ENCODE measurements at regions of chr9 and their contacts with region 1.

Region 1: DNA sequence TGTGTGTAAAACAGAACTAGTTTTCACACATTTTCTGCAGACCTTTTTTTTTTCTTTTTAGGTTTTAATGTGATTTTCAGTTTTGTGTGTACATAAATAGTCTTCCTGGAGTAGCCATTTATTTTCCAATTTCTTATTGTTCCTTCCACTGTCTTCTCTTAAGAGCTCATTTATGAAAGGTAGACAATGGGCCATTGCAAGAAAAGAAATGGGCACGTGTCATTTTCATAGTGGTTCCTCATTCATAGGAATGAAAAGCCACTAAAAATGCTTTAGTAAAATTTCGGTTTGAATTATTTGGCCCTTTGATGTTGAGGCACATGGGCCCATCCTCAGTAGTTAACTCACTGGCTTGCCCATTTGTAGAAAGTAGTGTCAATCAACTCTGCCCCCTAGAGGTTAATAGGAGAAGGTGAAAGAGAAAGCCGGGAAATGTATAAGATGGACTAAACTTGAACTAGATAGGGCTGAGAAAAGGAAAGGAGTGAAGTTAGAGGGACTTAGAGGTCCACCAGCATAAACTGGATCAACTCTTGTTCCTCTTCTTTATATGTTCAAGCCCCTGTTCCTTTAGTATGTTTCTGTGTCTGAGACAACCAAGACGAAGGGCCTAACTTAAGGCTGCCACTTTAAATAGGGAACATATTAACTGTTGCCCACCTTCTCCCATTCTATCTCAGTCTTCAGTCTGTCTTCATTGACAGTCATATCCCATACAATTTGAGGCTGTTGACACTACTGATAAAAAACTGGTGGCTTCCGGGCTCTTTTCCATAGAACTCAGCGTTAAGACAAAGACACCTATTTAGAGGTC is 72.6 kb downstream of the SMARCA2 start:
- DNase-seq: no peak
- ATAC-seq: peak; percentile 83
- H3K4me3 Mint-ChIP-seq: no peak overlapping the region
- H3K27ac Mint-ChIP-seq: no peak overlapping the region
- H3K4me1 Mint-ChIP-seq: no peaks in the 10 kb centered on the region
- H3K27me3 Mint-ChIP-seq: no peaks in the 10 kb centered on the region
- CTCF ChIP-seq: peak; percentile 40

Region 2: DNA sequence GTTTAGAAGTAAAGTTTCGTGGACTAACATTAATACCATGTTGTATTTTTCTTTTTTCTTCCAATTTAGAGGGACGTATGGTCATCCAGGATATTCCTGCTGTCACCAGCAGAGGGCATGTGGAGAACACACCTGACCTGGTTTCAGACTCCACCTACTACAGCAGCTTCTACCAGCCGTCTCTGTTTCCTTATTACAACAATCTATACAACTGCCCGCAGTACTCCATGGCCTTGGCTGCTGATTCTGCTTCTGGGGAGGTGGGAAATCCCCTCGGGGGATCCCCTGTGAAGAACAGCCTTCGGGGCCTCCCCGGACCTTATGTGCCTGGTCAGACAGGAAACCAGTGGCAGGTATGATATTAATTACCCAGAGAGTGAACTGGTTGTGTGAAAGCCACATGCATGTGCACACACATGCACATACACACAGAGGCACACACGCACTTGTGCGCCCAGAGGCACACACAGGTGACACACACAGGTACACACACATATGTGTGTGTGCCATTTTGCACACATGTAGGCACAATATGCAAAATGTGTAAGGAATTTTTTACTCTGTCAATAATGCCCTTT is 1193.8 kb before region 1 on chr9:
- CTCF ChIA-PET with region 1: interaction called, 4 read pairs
- POLR2A ChIA-PET with region 1: no interaction called
- intact Hi-C with region 1: loop called (anchors 10 kb)
- DNase-seq: peak; percentile 38
- ATAC-seq: peak; percentile 98
- H3K4me3 Mint-ChIP-seq: no peak overlapping the region
- H3K27ac Mint-ChIP-seq: peak overlapping the region; percentile 47
- H3K4me1 Mint-ChIP-seq: peaks cover 13% of the 10 kb centered on the region
- H3K27me3 Mint-ChIP-seq: peaks cover 18% of the 10 kb centered on the region
- CTCF ChIP-seq: no peak

Region 3: GRCh38 chr9:1460143-1460769 is 627.5 kb before region 1 on chr9:
- CTCF ChIA-PET with region 1: interaction called, 8 read pairs
- POLR2A ChIA-PET with region 1: no interaction called
- intact Hi-C with region 1: loop called (anchors 1 kb)
- DNase-seq: no peak
- ATAC-seq: no peak
- H3K4me3 Mint-ChIP-seq: no peak overlapping the region
- H3K27ac Mint-ChIP-seq: no peak overlapping the region
- H3K4me1 Mint-ChIP-seq: no peaks in the 10 kb centered on the region
- H3K27me3 Mint-ChIP-seq: peaks cover 4% of the 10 kb centered on the region
- CTCF ChIP-seq: no peak

Region 4: DNA sequence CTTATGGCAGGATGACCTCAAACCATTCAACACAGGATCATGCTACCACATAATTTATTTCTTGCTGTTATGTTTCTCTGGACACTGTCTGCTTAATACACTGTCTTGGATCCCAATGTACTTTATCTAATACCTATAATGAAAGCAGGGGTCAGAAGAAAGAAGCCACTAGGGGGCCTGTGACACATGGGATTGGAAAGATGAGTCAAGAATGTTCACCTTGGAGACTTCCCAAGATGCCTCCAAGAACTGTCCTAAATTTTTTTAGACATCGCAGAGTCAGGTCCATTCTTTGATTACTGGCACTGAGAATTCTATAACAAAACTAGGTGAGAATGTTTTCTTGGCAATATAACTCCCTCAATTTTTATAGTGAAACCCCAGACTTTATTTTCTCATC is 378.4 kb before region 1 on chr9:
- CTCF ChIA-PET with region 1: interaction called, 10 read pairs
- POLR2A ChIA-PET with region 1: no interaction called
- intact Hi-C with region 1: loop called (anchors 1 kb)
- DNase-seq: no peak
- ATAC-seq: no peak
- H3K4me3 Mint-ChIP-seq: no peak overlapping the region
- H3K27ac Mint-ChIP-seq: no peak overlapping the region
- H3K4me1 Mint-ChIP-seq: no peaks in the 10 kb centered on the region
- H3K27me3 Mint-ChIP-seq: peaks cover 4% of the 10 kb centered on the region
- CTCF ChIP-seq: no peak

Region 5: DNA sequence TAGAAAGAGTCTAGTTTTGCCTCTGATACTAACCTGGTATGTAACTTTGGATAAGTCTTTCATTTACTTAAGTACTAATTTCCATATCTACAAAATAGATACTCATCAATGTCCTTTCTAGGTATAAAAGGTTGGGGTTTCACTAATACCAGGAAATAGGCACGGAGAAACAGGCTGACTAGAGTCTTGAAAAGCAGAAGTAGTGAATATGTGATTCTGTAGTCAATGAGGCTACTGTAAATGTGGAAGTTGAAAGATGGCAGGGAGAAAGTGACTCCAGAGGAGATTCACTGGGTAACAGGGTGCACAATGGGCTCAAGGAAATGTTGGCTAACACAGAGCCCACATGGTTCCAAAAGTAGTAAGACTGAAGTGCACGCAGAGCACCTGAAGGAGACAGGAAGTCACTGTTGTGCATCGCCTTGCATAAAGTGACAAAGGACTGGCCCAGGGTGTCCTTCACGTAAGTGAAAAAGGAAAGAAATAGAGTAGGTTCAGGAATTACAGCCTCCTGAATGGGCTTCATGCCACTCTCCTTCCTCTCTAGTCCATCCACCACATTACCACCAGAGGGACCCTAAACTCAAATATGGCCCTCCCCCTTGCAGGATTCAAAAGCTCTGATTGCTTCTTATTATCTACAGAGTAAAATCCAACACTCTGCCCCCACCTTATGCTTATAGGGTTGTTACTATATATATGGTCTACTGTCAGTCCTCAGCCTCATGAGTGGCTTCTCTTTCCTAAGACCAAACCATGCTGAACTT is 360.5 kb before region 1 on chr9:
- CTCF ChIA-PET with region 1: interaction called, 9 read pairs
- POLR2A ChIA-PET with region 1: no interaction called
- intact Hi-C with region 1: loop called (anchors 1 kb)
- DNase-seq: no peak
- ATAC-seq: no peak
- H3K4me3 Mint-ChIP-seq: no peak overlapping the region
- H3K27ac Mint-ChIP-seq: no peak overlapping the region
- H3K4me1 Mint-ChIP-seq: no peaks in the 10 kb centered on the region
- H3K27me3 Mint-ChIP-seq: peaks cover 3% of the 10 kb centered on the region
- CTCF ChIP-seq: no peak

Region 6: GRCh38 chr9:2000314-2000713 is 87.4 kb before region 1 on chr9:
- CTCF ChIA-PET with region 1: no interaction called
- POLR2A ChIA-PET with region 1: no interaction called
- intact Hi-C with region 1: no loop called
- DNase-seq: no peak
- ATAC-seq: no peak
- H3K4me3 Mint-ChIP-seq: no peak overlapping the region
- H3K27ac Mint-ChIP-seq: no peak overlapping the region
- H3K4me1 Mint-ChIP-seq: peaks cover 13% of the 10 kb centered on the region
- H3K27me3 Mint-ChIP-seq: peaks cover 6% of the 10 kb centered on the region
- CTCF ChIP-seq: no peak

Region 7: DNA sequence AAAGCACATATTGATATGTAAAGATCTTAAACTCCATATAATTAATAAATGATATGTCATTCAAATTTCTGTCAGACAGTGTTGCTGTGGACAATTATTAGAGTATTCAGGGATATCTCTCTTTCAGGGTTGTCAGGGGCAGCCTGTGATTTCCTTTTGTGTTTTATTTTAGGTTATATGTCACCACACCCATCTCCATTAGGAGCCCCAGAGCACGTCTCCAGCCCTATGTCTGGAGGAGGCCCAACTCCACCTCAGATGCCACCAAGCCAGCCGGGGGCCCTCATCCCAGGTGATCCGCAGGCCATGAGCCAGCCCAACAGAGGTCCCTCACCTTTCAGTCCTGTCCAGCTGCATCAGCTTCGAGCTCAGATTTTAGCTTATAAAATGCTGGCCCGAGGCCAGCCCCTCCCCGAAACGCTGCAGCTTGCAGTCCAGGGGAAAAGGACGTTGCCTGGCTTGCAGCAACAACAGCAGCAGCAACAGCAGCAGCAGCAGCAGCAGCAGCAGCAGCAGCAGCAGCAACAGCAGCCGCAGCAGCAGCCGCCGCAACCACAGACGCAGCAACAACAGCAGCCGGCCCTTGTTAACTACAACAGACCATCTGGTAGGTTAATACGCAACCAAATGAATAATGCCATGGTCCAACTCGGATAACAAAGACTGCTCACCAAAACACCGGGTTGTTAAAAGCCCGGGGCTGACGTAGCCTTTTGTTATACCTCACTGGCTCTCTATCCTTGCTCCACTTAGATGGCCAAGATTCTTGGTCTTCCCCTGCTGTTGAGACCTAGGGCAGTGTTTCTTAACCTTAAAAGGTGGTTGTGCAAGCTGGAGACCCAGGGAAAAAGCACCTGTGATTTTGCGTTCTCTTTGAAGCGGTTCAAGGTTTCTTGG is 48.2 kb before region 1 on chr9:
- CTCF ChIA-PET with region 1: no interaction called
- POLR2A ChIA-PET with region 1: no interaction called
- intact Hi-C with region 1: no loop called
- DNase-seq: no peak
- ATAC-seq: no peak
- H3K4me3 Mint-ChIP-seq: no peak overlapping the region
- H3K27ac Mint-ChIP-seq: no peak overlapping the region
- H3K4me1 Mint-ChIP-seq: peaks cover 43% of the 10 kb centered on the region
- H3K27me3 Mint-ChIP-seq: no peaks in the 10 kb centered on the region
- CTCF ChIP-seq: no peak

Measured in activated B cell treated with CpG ODN at 0.5 μM for 24 hours (primary cell).